Activated B cell treated with CpG ODN at 0.5 μM for 24 hours (primary cell): ENCODE measurements at regions of chr19 and their contacts with region 1.

Region 1: DNA sequence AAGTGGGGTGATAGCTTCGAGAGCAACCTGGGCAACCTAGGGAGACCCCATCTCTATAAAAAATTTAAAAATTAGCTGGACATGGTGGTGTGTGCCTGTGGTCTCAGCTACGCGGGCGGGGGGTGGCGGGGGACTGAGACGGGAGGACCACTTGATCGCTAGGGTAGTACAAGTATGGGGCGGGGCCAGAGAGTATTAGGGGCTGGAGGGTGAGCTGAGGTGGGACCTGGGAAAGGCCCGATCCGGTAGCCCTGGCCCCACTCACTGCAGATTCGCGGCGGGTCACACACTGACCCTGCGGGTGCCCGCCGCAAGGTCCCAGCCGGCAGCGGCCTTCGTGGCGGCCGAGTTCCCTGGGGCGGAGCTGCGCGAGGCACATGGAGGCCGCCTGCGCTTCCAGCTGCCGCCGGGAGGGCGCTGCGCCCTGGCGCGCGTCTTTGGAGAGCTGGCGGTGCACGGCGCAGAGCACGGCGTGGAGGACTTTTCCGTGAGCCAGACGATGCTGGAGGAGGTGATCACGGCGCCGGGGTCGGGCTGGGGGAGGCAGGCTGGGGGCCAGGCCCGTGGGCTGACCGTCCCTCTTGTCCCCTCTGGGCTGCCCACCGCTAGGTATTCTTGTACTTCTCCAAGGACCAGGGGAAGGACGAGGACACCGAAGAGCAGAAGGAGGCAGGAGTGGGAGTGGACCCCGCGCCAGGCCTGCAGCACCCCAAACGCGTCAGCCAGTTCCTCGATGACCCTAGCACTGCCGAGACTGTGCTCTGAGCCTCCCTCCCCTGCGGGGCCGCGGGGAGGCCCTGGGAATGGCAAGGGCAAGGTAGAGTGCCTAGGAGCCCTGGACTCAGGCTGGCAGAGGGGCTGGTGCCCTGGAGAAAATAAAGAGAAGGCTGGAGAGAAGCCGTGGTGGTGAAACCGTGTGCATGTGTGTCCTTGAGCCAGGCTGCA is 2.0 kb upstream of the ARHGAP45 start:
- DNase-seq: peak; percentile 68
- ATAC-seq: peak; percentile 36
- H3K4me3 Mint-ChIP-seq: peak overlapping the region; percentile 60
- H3K27ac Mint-ChIP-seq: no peak overlapping the region
- H3K4me1 Mint-ChIP-seq: peaks cover 38% of the 10 kb centered on the region
- H3K27me3 Mint-ChIP-seq: no peaks in the 10 kb centered on the region
- CTCF ChIP-seq: peak; percentile 33

Region 2: GRCh38 chr19:913080-913748 is 151.7 kb before region 1 on chr19 and contains the start of gene R3HDM4:
- CTCF ChIA-PET with region 1: no interaction called
- POLR2A ChIA-PET with region 1: no interaction called
- intact Hi-C with region 1: no loop called
- DNase-seq: peak; percentile 85
- ATAC-seq: peak; percentile 50
- H3K4me3 Mint-ChIP-seq: peak within 1 kb of the TSS; percentile 89
- H3K27ac Mint-ChIP-seq: peak within 1 kb of the TSS; percentile 86
- H3K4me1 Mint-ChIP-seq: peaks cover 36% of the 10 kb centered on the region
- H3K27me3 Mint-ChIP-seq: no peaks in the 10 kb centered on the region
- CTCF ChIP-seq: no peak
- total RNA-seq, gene R3HDM4: 174 and 189 TPM in 2 replicates

Region 3: DNA sequence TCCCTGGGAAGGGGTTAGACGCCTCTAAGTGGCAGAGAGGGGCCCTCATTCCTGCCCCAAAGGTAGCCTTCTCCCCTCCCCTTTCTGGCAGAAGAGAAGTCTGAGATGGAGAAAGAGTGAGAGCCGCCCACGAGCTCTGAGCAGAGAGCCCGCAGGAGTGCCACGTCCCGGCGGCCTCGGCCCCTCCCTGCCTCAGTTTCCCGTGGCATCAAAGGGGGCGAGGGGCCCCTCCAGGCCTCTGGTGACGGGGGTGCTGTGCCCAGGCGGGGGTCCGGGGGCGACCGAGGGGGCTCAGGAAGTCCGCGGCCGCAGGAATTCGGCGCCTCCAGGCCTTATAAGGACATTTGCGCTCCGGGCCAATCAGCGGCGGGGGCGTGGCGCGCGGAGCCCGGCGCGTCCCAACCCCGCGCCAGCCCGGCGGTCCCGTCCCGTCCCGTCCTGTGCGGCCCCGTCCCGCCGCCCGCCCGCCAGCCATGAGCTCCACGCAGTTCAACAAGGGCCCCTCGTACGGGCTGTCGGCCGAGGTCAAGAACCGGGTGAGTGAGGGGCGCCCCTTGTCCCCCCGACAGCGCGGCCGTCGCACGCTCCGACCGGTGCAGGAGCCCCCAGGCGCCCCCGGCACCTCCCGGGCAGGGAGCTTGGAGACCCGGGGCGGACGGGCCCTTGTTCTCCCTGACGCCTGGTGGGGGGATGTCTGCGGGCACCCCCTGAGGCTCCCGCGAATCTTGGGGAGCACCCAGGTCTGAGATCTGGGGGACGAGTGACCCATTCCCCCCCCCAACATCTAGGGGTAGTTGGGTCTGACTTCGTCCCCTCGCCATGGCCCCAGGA is 38.5 kb before region 1 on chr19 and contains the start of gene CNN2:
- CTCF ChIA-PET with region 1: interaction called, 13 read pairs
- POLR2A ChIA-PET with region 1: interaction called, 56 read pairs
- intact Hi-C with region 1: loop called (anchors 1 kb)
- DNase-seq: peak; percentile 76
- ATAC-seq: peak; percentile 61
- H3K4me3 Mint-ChIP-seq: peak within 1 kb of the TSS; percentile 95
- H3K27ac Mint-ChIP-seq: peak within 1 kb of the TSS; percentile 91
- H3K4me1 Mint-ChIP-seq: peaks cover 29% of the 10 kb centered on the region
- H3K27me3 Mint-ChIP-seq: no peaks in the 10 kb centered on the region
- CTCF ChIP-seq: no peak
- total RNA-seq, gene CNN2: 352 and 371 TPM in 2 replicates

Region 4: DNA sequence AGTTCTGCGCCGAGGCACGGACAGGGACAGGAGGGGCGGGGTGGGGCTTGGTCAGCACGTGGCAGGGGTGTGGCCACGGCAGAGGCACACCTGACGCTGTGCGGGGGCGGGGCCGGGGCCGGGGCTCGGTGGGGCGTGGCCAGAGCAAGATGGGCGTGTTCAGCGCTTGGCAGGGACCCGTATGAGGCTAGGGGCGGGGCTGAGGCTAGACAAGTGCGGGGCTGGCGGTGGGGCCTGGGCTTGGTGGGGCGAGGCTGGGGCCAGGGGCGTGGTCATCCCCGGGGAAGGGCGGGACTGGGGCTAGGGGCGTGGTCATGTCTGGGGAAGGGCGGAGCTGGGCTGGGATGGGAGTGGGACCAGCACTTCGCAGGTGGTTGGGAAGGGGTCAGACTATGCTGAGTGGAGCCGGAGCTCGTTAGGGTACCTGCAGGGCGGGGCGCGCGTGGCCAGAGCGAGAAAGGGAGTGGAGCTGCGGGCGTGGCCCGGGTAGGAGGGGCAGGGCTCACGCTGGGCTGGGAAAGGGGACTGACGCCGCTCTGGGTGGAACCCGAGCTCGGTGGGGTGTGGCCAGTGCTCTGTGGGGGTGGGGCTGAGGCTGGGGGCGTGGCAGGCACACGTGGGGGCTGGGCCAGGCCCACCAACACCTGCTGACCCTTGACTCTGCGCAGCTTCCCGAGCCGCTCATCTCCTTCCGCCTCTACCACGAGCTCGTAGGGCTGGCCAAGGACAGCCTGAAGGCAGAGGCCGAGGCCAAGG is 17.4 kb after region 1 on chr19:
- CTCF ChIA-PET with region 1: interaction called, 7 read pairs
- POLR2A ChIA-PET with region 1: interaction called, 184 read pairs
- intact Hi-C with region 1: loop called (anchors 1 kb)
- DNase-seq: no peak
- ATAC-seq: peak; percentile 63
- H3K4me3 Mint-ChIP-seq: no peak overlapping the region
- H3K27ac Mint-ChIP-seq: peak overlapping the region; percentile 65
- H3K4me1 Mint-ChIP-seq: peaks cover 52% of the 10 kb centered on the region
- H3K27me3 Mint-ChIP-seq: no peaks in the 10 kb centered on the region
- CTCF ChIP-seq: no peak

Region 5: DNA sequence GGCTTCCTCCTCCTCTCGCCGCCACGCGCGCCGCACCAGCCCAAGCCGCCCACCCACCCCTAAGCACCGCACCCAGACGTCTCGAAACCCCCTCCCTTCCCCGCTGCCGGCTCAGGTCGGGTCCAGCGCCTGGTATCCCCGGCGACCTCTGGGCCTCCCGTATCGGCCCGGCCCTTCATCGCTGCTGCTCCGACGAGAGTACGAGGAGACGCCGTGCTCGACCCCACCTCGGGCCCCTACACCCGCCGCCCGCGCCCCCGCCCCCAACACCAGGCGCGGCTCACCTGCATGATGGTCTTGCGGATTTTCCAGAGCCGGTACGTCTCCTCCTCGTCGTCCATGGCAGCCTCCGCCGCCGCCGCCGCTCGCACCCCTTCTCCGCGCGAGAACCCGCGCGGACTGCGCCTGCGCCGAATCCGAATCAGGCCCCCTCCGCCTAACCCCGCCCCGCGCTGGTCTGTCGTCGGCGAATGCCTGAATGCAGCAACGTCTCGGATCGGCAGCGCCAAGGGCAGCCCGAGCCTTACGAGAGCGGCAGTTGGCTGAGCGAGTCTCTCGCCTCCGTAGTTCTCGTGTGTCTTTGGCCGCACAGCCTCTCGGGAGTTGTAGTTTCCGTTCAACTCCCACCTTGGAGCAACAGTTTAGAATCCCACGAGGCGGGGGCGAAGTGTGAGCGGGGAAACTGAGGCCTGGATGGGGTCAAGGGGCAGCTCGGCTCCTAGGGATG is 30.2 kb after region 1 on chr19 and contains the start of gene POLR2E:
- CTCF ChIA-PET with region 1: interaction called, 5 read pairs
- POLR2A ChIA-PET with region 1: interaction called, 184 read pairs
- intact Hi-C with region 1: no loop called
- DNase-seq: peak; percentile 98
- ATAC-seq: peak; percentile 98
- H3K4me3 Mint-ChIP-seq: peak within 1 kb of the TSS; percentile 90
- H3K27ac Mint-ChIP-seq: peak within 1 kb of the TSS; percentile 84
- H3K4me1 Mint-ChIP-seq: peaks cover 45% of the 10 kb centered on the region
- H3K27me3 Mint-ChIP-seq: no peaks in the 10 kb centered on the region
- CTCF ChIP-seq: no peak
- total RNA-seq, gene POLR2E: 173 and 184 TPM in 2 replicates

Region 6: DNA sequence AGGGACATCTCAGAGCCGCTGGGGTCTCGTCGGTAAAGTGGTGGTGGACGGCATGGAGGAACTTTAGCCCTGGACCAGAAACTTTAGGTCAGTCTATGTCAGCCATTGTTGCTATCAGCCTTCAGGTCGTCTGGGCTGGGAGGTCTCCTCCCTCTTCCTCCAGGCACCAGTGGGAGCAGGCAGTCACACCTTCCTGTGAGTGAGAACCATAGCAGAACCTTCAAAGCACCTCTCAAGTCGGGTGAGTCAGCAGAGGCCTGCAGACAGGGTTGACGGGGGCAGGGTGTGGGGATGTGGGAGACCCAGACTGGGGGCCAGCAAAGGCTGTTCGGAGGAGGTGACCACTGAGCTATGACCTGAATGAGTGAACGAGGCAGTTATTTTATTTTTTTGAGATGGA is 124.5 kb after region 1 on chr19:
- CTCF ChIA-PET with region 1: no interaction called
- POLR2A ChIA-PET with region 1: interaction called, 3 read pairs
- intact Hi-C with region 1: loop called (anchors 5 kb)
- DNase-seq: no peak
- ATAC-seq: no peak
- H3K4me3 Mint-ChIP-seq: no peak overlapping the region
- H3K27ac Mint-ChIP-seq: no peak overlapping the region
- H3K4me1 Mint-ChIP-seq: no peaks in the 10 kb centered on the region
- H3K27me3 Mint-ChIP-seq: no peaks in the 10 kb centered on the region
- CTCF ChIP-seq: no peak